Thyroid gland (tissue), 4 donors: ENCODE measurements at regions of chr1 and their contacts with region 1.

Region 1: GRCh38 chr1:114757455-114758250 is at the start of gene CSDE1:
- DNase-seq: peak; percentile 95 to 97
- H3K4me3 ChIP-seq: peak within 1 kb of the TSS; percentile 68 to 81 (median 75)
- H3K27ac ChIP-seq: peak within 1 kb of the TSS; percentile 97 to 100 (median 98)
- H3K4me1 ChIP-seq: peaks cover 21 to 50% of the 10 kb centered on the region in 2 donors
- H3K27me3 ChIP-seq: no peaks in the 10 kb centered on the region
- CTCF ChIP-seq: peak in 3 of 6 experiments; percentile 10 to 44 (median 24)
- POLR2A ChIP-seq: peak; percentile 45 to 93
- total RNA-seq, gene CSDE1: 548 to 1,437 (median 734) TPM

Region 2: GRCh38 chr1:114581335-114582287 is 176.0 kb before region 1 on chr1 and contains the start of gene BCAS2:
- intact Hi-C with region 1: loop called (anchors 5 kb)
- DNase-seq: peak; percentile 98
- H3K4me3 ChIP-seq: peak within 1 kb of the TSS; percentile 48 to 79 (median 58)
- H3K27ac ChIP-seq: peak within 1 kb of the TSS; percentile 80 to 97 (median 81)
- H3K4me1 ChIP-seq: peaks cover 32 to 33% of the 10 kb centered on the region in 2 donors
- H3K27me3 ChIP-seq: no peaks in the 10 kb centered on the region
- CTCF ChIP-seq: no peak
- POLR2A ChIP-seq: peak in 1 of 2 donors; percentile 93
- total RNA-seq, gene BCAS2: 30.8 to 52.5 (median 46.9) TPM